Activated T-helper 1 cell treated with anti-CD3 and anti-CD28 coated beads, Interleukin-12 subunit alpha, Interleukin-12 subunit beta, Interleukin-2, Interleukin-4 antibody, amounts not matched to agents 30 ng/mL and 10 ng/mL and 1 ng/mL, durations not matched to agents 14 hours and 24 hours and 36 hours (primary cell): ENCODE measurements at regions of chr17 and their contacts with region 1.

Region 1: DNA sequence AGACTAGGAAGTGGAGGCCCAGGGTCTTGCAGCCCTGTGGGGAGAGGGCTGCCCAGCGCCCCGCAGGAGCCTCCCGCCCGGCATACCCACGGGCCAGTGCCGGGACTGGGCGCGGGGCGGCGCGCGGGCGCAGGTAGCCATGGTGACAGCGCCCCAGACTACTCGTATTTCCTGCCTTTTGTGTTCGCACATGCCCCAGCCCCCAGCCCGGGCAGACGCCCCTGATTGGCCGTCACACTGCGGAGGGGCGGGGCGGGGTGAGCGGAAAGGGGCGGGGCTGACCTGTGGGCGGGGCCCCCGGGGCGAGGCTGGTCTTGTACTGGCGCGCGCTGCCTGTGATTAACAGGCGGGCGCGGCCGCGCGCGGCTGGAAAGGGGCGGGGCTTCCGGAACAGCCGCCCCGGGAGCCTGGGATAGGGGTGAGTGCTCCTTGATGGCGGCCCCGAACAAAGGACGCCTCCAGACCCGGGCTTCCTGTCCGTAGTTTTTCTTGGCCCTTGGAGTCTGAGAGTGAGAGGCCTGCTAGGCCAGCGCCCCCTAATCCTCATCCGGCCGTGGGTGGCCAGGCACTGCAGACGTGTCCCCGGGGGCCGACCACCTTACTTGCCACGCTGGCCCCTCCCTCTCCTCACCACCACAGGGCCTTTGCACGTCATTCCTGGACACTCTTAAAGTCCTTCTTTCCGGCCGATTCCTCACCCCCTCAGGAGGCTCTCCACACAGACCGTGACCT is 71.0 kb downstream of the RAI1 start:
- DNase-seq: peak; percentile 97
- H3K4me3 Mint-ChIP-seq: peak overlapping the region; percentile 91
- H3K27ac Mint-ChIP-seq: peak overlapping the region; percentile 95
- H3K4me1 Mint-ChIP-seq: peaks cover 46% of the 10 kb centered on the region
- H3K27me3 Mint-ChIP-seq: no peaks in the 10 kb centered on the region

Region 2: GRCh38 chr17:17303010-17303846 is 449.0 kb before region 1 on chr17 and contains the start of gene NT5M:
- intact Hi-C with region 1: loop called (anchors 1 kb)
- DNase-seq: peak; percentile 72
- H3K4me3 Mint-ChIP-seq: peak within 1 kb of the TSS; percentile 90
- H3K27ac Mint-ChIP-seq: peak within 1 kb of the TSS; percentile 97
- H3K4me1 Mint-ChIP-seq: peaks cover 36% of the 10 kb centered on the region
- H3K27me3 Mint-ChIP-seq: no peaks in the 10 kb centered on the region
- total RNA-seq, gene NT5M: 5.1 and 5.8 TPM in 2 replicates

Region 3: DNA sequence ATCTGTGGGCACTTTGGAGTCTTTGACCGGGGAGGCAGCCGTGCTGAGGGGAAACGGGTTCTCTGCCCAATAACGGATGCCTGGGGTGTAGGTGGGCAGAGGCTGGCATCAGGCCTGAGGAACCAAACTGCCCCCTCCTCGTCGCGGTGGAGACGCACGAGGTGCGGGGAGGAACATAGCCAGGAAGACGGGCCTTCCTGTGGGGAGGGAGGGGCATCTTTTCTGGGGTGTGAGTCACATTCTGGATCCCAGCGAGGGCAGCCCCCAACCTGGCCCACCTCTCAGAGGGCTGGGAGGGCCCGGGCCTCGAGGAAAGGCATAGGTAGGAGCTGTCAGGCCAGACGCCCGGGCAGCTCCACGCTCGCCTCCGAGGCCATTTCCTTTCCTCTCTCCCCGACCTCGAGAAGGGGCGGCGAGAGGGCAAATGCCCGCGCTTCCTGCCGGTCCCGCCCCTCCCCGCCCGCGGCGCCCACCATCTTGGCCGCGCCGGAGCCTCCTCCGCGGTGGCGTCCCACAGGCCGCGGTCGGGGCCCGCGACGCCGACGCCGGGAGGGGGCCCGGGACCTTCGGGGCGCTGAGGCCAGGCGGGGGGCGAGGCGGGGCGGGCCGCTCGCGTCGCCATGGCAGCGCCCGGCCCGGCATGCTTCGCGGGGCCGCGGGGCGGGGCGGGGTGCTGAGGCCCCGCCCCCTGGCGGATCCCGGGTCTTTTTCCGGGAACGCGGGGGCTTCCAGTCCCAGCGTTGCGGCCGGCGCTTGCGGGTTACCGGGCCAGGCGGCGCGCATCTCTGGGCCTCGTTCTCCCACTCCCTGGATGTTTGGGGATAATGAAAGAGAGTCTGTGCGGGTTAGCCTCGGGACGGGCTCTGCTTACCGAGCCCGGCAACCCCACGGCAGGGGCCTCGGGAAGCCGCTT is 57.8 kb before region 1 on chr17:
- intact Hi-C with region 1: loop called (anchors 1 kb)
- DNase-seq: peak; percentile 72
- H3K4me3 Mint-ChIP-seq: peak overlapping the region; percentile 88
- H3K27ac Mint-ChIP-seq: peak overlapping the region; percentile 94
- H3K4me1 Mint-ChIP-seq: peaks cover 73% of the 10 kb centered on the region
- H3K27me3 Mint-ChIP-seq: no peaks in the 10 kb centered on the region

Region 4: GRCh38 chr17:17792551-17793377 is 40.5 kb after region 1 on chr17:
- intact Hi-C with region 1: loop called (anchors 1 kb)
- DNase-seq: peak; percentile 68
- H3K4me3 Mint-ChIP-seq: peak overlapping the region; percentile 42
- H3K27ac Mint-ChIP-seq: peak overlapping the region; percentile 84
- H3K4me1 Mint-ChIP-seq: peaks cover 26% of the 10 kb centered on the region
- H3K27me3 Mint-ChIP-seq: no peaks in the 10 kb centered on the region

Region 5: GRCh38 chr17:17849845-17850373 is 97.7 kb after region 1 on chr17:
- intact Hi-C with region 1: loop called (anchors 5 kb)
- DNase-seq: peak; percentile 72
- H3K4me3 Mint-ChIP-seq: peak overlapping the region; percentile 61
- H3K27ac Mint-ChIP-seq: peak overlapping the region; percentile 86
- H3K4me1 Mint-ChIP-seq: peaks cover 71% of the 10 kb centered on the region
- H3K27me3 Mint-ChIP-seq: no peaks in the 10 kb centered on the region

Region 6: GRCh38 chr17:18183334-18184142 is 431.3 kb after region 1 on chr17 and contains the start of gene ALKBH5:
- intact Hi-C with region 1: loop called (anchors 5 kb)
- DNase-seq: peak; percentile 95
- H3K4me3 Mint-ChIP-seq: peak within 1 kb of the TSS; percentile 98
- H3K27ac Mint-ChIP-seq: peak within 1 kb of the TSS; percentile 97
- H3K4me1 Mint-ChIP-seq: peaks cover 64% of the 10 kb centered on the region
- H3K27me3 Mint-ChIP-seq: no peaks in the 10 kb centered on the region
- total RNA-seq, gene ALKBH5: 127 and 128 TPM in 2 replicates